B cell (primary cell): ENCODE measurements at regions of chr11 and their contacts with region 1.

Region 1: DNA sequence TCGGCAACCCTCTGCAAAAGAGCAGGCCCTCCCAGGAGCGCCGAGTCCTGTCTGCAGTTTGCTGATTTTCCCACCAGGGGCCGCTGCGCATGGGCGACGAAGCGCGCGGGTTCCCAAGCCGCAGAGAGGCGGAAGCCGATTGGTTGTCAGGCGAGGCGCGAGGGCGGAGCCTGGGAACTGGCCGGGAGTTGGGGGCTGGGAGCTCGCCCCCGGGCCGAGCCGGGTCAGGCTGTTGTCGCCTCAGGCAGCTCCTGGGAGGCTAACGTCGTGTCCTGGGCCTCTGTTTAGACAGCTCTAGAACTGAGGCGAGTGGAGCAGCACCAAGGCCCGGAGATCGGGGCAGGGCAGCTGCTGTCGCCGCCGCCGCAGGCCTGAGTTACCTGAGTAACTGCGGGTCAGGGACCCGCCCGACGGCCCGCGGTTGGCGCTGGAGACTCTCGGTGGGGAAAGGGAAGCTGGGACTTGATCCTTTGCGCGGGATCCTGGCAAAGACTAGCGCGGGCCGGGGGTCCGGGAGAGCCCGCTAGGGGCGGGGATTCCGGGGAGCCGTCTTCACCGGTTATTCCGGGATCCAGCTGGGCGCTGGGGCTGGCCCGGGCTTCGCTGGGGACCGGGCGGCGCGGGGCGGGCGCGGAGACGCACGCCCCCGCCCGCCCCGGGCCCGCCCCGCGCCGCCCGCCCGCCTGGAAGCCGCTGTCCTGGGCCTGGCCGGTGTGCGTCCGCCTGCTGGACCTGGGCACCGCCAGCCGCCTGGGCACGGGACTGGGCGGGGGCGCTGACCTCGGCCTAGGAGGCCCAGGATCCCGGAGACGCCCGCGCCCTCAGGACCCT is at the start of gene STIM1:
- DNase-seq: peak; percentile 97
- ATAC-seq: peak; percentile 74
- H3K4me3 ChIP-seq: peak within 1 kb of the TSS; percentile 78 to 93 (median 91)
- H3K4me3 Mint-ChIP-seq: peak within 1 kb of the TSS; percentile 98
- H3K27ac ChIP-seq: peak within 1 kb of the TSS; percentile 98 to 99
- H3K27ac Mint-ChIP-seq: peak within 1 kb of the TSS; percentile 99
- H3K4me1 ChIP-seq: peaks cover 61 to 63% of the 10 kb centered on the region in 2 donors
- H3K4me1 Mint-ChIP-seq: peaks cover 61% of the 10 kb centered on the region
- H3K27me3 ChIP-seq: no peaks in the 10 kb centered on the region
- H3K27me3 Mint-ChIP-seq: no peaks in the 10 kb centered on the region
- CTCF ChIP-seq: peak; percentile 90
- total RNA-seq, gene STIM1: 74.8 and 76.7 TPM in 2 replicates

Region 2: DNA sequence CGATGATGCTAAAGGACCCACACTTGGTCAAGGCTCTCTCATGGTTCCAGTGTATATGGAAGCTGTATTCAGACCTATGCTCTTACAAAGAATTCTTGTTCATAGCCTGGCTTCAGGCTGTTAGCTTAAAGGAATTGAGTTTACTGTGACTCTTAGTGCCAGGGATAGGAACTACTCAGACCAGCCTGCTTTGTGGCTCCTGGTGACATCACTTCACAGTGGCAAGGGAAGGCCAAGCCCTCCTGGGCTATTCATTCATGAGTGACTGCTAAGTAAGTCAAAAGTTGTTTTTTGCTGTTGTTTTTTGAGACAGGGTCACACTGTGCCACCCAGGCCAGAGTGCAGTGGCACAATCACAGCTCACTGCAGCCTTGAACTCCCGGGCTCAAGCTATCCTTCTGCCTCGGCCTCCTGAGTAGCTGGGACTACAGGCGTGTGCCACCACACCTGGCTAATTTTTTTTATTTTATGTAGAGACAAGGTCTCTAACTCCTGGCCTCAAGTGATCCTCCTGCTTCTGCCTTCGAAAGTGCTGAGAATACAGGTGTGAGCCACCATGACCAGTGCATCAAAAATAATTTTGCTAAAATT is 223.0 kb before region 1 on chr11:
- CTCF ChIA-PET with region 1: no interaction called
- POLR2A ChIA-PET with region 1: no interaction called
- intact Hi-C with region 1: no loop called
- DNase-seq: no peak
- ATAC-seq: no peak
- H3K4me3 ChIP-seq: no peak overlapping the region
- H3K4me3 Mint-ChIP-seq: no peak overlapping the region
- H3K27ac ChIP-seq: no peak overlapping the region
- H3K27ac Mint-ChIP-seq: no peak overlapping the region
- H3K4me1 ChIP-seq: no peaks in the 10 kb centered on the region
- H3K4me1 Mint-ChIP-seq: no peaks in the 10 kb centered on the region
- H3K27me3 ChIP-seq: peaks cover 0 to 4% (median 0%) of the 10 kb centered on the region in 4 experiments
- H3K27me3 Mint-ChIP-seq: peaks cover 21% of the 10 kb centered on the region
- CTCF ChIP-seq: no peak

Region 3: DNA sequence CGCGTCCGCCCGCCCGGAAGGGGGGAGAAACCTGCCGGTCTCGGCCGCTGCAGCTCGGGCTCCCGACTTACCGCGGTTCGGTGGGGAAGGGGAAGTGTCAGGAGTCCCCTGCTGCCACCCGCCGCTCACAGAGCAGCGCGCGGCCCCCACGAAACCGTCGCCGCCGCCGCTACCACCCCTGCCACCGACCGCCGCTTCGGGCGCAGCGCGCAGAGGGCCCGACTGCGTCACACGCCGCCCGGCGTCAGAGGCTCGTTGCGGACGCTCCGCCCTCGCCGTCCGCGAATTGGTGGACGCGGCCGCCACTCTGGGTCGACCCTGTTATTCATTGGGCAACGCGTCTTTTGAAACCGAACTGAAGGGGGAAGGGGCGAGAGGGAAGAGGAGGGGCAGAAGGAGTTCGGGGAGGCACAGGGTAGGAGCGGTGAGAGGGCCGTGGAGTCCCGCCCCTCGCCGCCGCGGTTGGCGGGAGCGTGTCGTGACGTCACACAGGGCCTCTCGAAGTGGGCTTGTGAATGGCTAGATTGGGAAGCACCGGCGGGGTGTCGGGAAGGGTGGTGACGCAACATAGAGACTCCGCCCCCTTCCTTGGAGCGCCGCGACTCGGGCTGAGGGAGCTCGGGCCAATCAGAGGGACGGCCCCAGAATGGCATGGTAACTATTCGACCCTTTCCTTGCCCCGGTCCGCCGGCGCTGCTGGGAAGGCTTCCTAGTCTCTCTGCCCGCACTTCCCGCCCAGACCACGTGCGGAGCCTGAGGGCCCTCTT is 57.7 kb before region 1 on chr11 and contains the start of gene NUP98:
- CTCF ChIA-PET with region 1: interaction called, 10 read pairs
- POLR2A ChIA-PET with region 1: no interaction called
- intact Hi-C with region 1: loop called (anchors 1 kb)
- DNase-seq: peak; percentile 100
- ATAC-seq: peak; percentile 91
- H3K4me3 ChIP-seq: peak within 1 kb of the TSS; percentile 93 to 98 (median 96)
- H3K4me3 Mint-ChIP-seq: peak within 1 kb of the TSS; percentile 97
- H3K27ac ChIP-seq: peak within 1 kb of the TSS; percentile 93 to 97
- H3K27ac Mint-ChIP-seq: peak within 1 kb of the TSS; percentile 97
- H3K4me1 ChIP-seq: peaks cover 21 to 31% of the 10 kb centered on the region in 2 donors
- H3K4me1 Mint-ChIP-seq: peaks cover 35% of the 10 kb centered on the region
- H3K27me3 ChIP-seq: no peaks in the 10 kb centered on the region
- H3K27me3 Mint-ChIP-seq: no peaks in the 10 kb centered on the region
- CTCF ChIP-seq: no peak
- total RNA-seq, gene NUP98: 105 and 111 TPM in 2 replicates

Region 4: DNA sequence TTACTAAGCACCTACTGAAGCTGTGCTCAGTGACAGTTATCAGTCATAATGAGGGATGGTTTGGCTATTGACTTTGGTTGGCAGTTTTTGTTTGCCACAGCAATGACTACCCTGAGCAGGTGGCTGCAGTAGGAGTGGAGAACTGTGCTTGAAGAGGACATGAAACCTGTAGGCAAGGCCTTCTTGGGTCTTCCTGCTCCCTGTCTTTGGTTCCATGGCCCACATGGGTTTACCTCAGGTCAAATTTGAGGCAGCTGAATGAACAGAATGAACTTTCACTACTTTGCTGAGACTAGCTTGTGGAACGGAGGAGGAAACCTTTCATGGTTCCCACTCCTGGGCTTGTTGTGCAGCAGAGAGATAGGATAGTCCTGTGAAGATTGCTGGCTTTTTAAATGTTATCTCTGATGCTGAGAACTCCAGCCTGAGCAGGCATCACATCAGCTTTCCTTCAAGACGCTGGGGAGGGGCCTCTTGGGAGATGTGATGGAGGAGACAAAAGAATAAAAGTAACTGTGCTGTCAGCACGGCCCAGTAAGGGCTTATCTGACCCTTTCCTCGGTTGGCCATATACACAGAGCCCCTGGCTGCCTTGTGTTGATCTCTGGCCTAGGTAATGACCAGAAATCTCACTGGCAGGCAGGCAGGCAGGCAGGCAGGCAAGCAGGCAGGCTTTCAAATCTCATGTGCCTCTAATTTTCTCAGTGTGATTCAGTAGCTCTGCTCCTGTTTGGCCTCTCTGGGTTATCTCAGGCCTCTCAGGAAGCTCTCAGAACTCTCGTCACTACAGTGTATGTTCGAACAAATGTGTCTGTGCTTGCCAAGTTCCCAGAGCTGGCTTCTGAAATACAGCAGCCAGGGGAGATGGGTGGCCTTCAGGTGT is 12.3 kb after region 1 on chr11:
- CTCF ChIA-PET with region 1: interaction called, 662 read pairs
- POLR2A ChIA-PET with region 1: interaction called, 19 read pairs
- intact Hi-C with region 1: no loop called
- DNase-seq: peak; percentile 52
- ATAC-seq: peak; percentile 50
- H3K4me3 ChIP-seq: no peak overlapping the region
- H3K4me3 Mint-ChIP-seq: peak overlapping the region; percentile 74
- H3K27ac ChIP-seq: peak overlapping the region; percentile 14 to 55
- H3K27ac Mint-ChIP-seq: peak overlapping the region; percentile 87
- H3K4me1 ChIP-seq: peaks cover 65 to 68% of the 10 kb centered on the region in 2 donors
- H3K4me1 Mint-ChIP-seq: peaks cover 79% of the 10 kb centered on the region
- H3K27me3 ChIP-seq: no peaks in the 10 kb centered on the region
- H3K27me3 Mint-ChIP-seq: no peaks in the 10 kb centered on the region
- CTCF ChIP-seq: no peak

Region 5: DNA sequence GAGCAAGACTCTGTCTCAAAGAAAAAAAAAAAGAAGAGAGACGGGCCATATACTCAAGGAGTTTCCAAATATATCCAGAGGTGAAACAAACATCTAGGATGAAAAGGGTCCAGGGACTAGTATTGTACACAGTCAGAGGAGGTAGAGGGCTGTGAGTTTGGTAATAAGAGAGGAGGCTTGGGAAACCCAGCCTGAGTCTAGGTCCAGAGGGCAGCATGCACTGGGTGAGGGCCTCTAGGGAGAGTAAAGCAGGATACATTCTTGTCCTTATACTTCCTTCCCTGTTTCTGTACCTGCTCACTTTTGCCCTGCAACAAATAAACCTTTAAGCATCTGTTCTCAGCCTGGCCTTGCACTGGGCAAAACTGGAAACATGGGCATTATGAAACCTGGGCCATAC is 31.8 kb after region 1 on chr11:
- CTCF ChIA-PET with region 1: interaction called, 662 read pairs
- POLR2A ChIA-PET with region 1: interaction called, 5 read pairs
- intact Hi-C with region 1: no loop called
- DNase-seq: no peak
- ATAC-seq: no peak
- H3K4me3 ChIP-seq: no peak overlapping the region
- H3K4me3 Mint-ChIP-seq: peak overlapping the region; percentile 46
- H3K27ac ChIP-seq: peak overlapping the region in 1 of 2 donors; percentile 5
- H3K27ac Mint-ChIP-seq: peak overlapping the region; percentile 52
- H3K4me1 ChIP-seq: peaks cover 77 to 87% of the 10 kb centered on the region in 2 donors
- H3K4me1 Mint-ChIP-seq: peaks cover 74% of the 10 kb centered on the region
- H3K27me3 ChIP-seq: no peaks in the 10 kb centered on the region
- H3K27me3 Mint-ChIP-seq: no peaks in the 10 kb centered on the region
- CTCF ChIP-seq: no peak

Region 6: GRCh38 chr11:3914805-3915204 is 59.6 kb after region 1 on chr11:
- CTCF ChIA-PET with region 1: interaction called, 15 read pairs
- POLR2A ChIA-PET with region 1: interaction called, 8 read pairs
- intact Hi-C with region 1: no loop called
- DNase-seq: peak; percentile 66
- ATAC-seq: peak; percentile 67
- H3K4me3 ChIP-seq: no peak overlapping the region
- H3K4me3 Mint-ChIP-seq: peak overlapping the region; percentile 58
- H3K27ac ChIP-seq: peak overlapping the region; percentile 0 to 35
- H3K27ac Mint-ChIP-seq: peak overlapping the region; percentile 74
- H3K4me1 ChIP-seq: peaks cover 33 to 40% of the 10 kb centered on the region in 2 donors
- H3K4me1 Mint-ChIP-seq: peaks cover 66% of the 10 kb centered on the region
- H3K27me3 ChIP-seq: no peaks in the 10 kb centered on the region
- H3K27me3 Mint-ChIP-seq: no peaks in the 10 kb centered on the region
- CTCF ChIP-seq: no peak

Region 7: GRCh38 chr11:3959015-3959919 is 104.1 kb after region 1 on chr11:
- CTCF ChIA-PET with region 1: interaction called, 46 read pairs
- POLR2A ChIA-PET with region 1: interaction called, 7 read pairs
- intact Hi-C with region 1: no loop called
- DNase-seq: peak; percentile 31
- ATAC-seq: no peak
- H3K4me3 ChIP-seq: no peak overlapping the region
- H3K4me3 Mint-ChIP-seq: no peak overlapping the region
- H3K27ac ChIP-seq: no peak overlapping the region
- H3K27ac Mint-ChIP-seq: no peak overlapping the region
- H3K4me1 ChIP-seq: peaks cover 13% of the 10 kb centered on the region in 2 donors
- H3K4me1 Mint-ChIP-seq: peaks cover 53% of the 10 kb centered on the region
- H3K27me3 ChIP-seq: no peaks in the 10 kb centered on the region
- H3K27me3 Mint-ChIP-seq: no peaks in the 10 kb centered on the region
- CTCF ChIP-seq: peak; percentile 14

Region 8: GRCh38 chr11:4072668-4073285 is 217.6 kb after region 1 on chr11:
- CTCF ChIA-PET with region 1: interaction called, 819 read pairs
- POLR2A ChIA-PET with region 1: interaction called, 12 read pairs
- intact Hi-C with region 1: loop called (anchors 1 kb)
- DNase-seq: peak; percentile 82
- ATAC-seq: peak; percentile 73
- H3K4me3 ChIP-seq: no peak overlapping the region
- H3K4me3 Mint-ChIP-seq: no peak overlapping the region
- H3K27ac ChIP-seq: peak overlapping the region in 1 of 2 donors; percentile 31
- H3K27ac Mint-ChIP-seq: peak overlapping the region; percentile 5
- H3K4me1 ChIP-seq: peaks cover 4 to 14% of the 10 kb centered on the region in 2 donors
- H3K4me1 Mint-ChIP-seq: peaks cover 20% of the 10 kb centered on the region
- H3K27me3 ChIP-seq: no peaks in the 10 kb centered on the region
- H3K27me3 Mint-ChIP-seq: no peaks in the 10 kb centered on the region
- CTCF ChIP-seq: peak; percentile 95

Region 9: GRCh38 chr11:4203603-4204360 is 348.6 kb after region 1 on chr11:
- CTCF ChIA-PET with region 1: no interaction called
- POLR2A ChIA-PET with region 1: no interaction called
- intact Hi-C with region 1: no loop called
- DNase-seq: no peak
- ATAC-seq: no peak
- H3K4me3 ChIP-seq: no peak overlapping the region
- H3K4me3 Mint-ChIP-seq: no peak overlapping the region
- H3K27ac ChIP-seq: no peak overlapping the region
- H3K27ac Mint-ChIP-seq: no peak overlapping the region
- H3K4me1 ChIP-seq: no peaks in the 10 kb centered on the region
- H3K4me1 Mint-ChIP-seq: no peaks in the 10 kb centered on the region
- H3K27me3 ChIP-seq: peaks cover 0 to 8% (median 2%) of the 10 kb centered on the region in 4 experiments
- H3K27me3 Mint-ChIP-seq: peaks cover 42% of the 10 kb centered on the region
- CTCF ChIP-seq: no peak

Region 10: GRCh38 chr11:5088556-5088955 is 1233.4 kb after region 1 on chr11:
- CTCF ChIA-PET with region 1: no interaction called
- POLR2A ChIA-PET with region 1: no interaction called
- intact Hi-C with region 1: no loop called
- DNase-seq: no peak
- ATAC-seq: no peak
- H3K4me3 ChIP-seq: no peak overlapping the region
- H3K4me3 Mint-ChIP-seq: no peak overlapping the region
- H3K27ac ChIP-seq: no peak overlapping the region
- H3K27ac Mint-ChIP-seq: no peak overlapping the region
- H3K4me1 ChIP-seq: no peaks in the 10 kb centered on the region
- H3K4me1 Mint-ChIP-seq: no peaks in the 10 kb centered on the region
- H3K27me3 ChIP-seq: no peaks in the 10 kb centered on the region
- H3K27me3 Mint-ChIP-seq: peaks cover 4% of the 10 kb centered on the region
- CTCF ChIP-seq: no peak